ENCODE measurements at regions of chr17 and their contacts with region 1.

Region 1: GRCh38 chr17:42193969-42194899 is at the start of gene GHDC:
- DNase-seq: peak; percentile 55 to 88 (median 73)
- ATAC-seq: peak; percentile 97
- H3K4me3 ChIP-seq: peak within 1 kb of the TSS; percentile 75
- H3K4me3 Mint-ChIP-seq: peak within 1 kb of the TSS; percentile 95
- H3K27ac ChIP-seq: peak within 1 kb of the TSS; percentile 34 to 39
- H3K27ac Mint-ChIP-seq: peak within 1 kb of the TSS; percentile 76
- H3K4me1 ChIP-seq: peaks cover 26% of the 10 kb centered on the region
- H3K4me1 Mint-ChIP-seq: peaks cover 18% of the 10 kb centered on the region
- H3K27me3 ChIP-seq: no peaks in the 10 kb centered on the region
- H3K27me3 Mint-ChIP-seq: no peaks in the 10 kb centered on the region
- CTCF ChIP-seq: no peak
- total RNA-seq, gene GHDC: 6.8 to 8.3 TPM

Region 2: GRCh38 chr17:42039794-42040763 is 154.2 kb before region 1 on chr17:
- CTCF ChIA-PET with region 1: no interaction called
- POLR2A ChIA-PET with region 1: no interaction called
- intact Hi-C with region 1: no loop called
- DNase-seq: no peak
- ATAC-seq: no peak
- H3K4me3 ChIP-seq: no peak overlapping the region
- H3K4me3 Mint-ChIP-seq: no peak overlapping the region
- H3K27ac ChIP-seq: no peak overlapping the region
- H3K27ac Mint-ChIP-seq: no peak overlapping the region
- H3K4me1 ChIP-seq: no peaks in the 10 kb centered on the region
- H3K4me1 Mint-ChIP-seq: no peaks in the 10 kb centered on the region
- H3K27me3 ChIP-seq: peaks cover 2 to 4% of the 10 kb centered on the region in 2 experiments
- H3K27me3 Mint-ChIP-seq: peaks cover 19% of the 10 kb centered on the region
- CTCF ChIP-seq: no peak

Region 3: DNA sequence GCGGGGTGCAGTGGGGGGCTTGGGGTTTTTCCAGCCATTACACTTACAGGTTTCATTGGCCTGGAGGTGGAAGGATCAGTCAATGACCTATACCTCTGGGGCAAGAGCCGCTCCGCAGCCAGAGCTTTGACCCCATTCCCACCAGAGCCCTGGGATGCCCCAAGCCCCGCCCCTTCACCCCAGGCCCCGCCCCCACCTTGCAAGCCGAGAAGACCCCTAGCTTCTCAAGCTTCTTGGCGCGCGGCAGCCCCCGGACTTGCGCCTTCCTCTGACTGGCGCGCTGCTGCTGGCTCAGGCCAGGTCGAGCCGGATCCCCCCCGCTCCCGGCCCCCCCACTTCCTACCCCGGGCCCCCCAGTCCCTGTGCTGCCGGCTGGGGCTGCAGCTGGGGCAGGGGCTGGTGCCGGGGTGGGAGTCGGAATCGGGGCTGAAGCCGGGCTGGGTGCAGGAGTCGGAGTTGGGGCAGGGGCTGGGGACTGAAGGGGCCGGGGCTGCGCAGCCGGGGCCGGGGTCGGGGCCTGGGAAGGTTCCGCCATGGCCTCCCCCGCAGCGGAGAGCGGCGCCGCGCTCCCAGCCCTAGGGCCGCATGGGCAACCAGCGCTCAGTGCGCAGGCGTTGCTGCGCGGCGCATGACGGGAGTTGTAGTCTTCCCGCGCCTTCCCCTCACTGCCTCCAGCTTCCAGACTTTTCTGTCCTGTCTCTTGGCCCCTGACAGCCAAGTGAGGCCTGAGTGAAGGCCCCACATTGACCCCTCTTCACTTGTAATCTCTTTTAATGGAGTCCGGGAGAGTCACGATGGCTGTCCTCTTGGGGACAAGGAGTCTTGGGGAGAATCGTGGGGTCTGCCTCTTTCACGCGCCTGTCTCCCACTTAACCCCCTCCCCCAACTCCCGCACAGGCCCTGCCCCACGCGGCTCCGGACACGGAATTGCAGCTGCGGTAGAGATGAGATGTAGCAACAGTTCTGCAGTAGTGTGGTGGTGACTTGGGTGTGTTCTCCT is 73.2 kb before region 1 on chr17 and contains the start of gene KAT2A:
- CTCF ChIA-PET with region 1: no interaction called
- POLR2A ChIA-PET with region 1: no interaction called
- intact Hi-C with region 1: loop called in 1 of 2 experiments (anchors 5 kb)
- DNase-seq: peak; percentile 59 to 89 (median 72)
- ATAC-seq: peak; percentile 88
- H3K4me3 ChIP-seq: peak within 1 kb of the TSS; percentile 48
- H3K4me3 Mint-ChIP-seq: peak within 1 kb of the TSS; percentile 82
- H3K27ac ChIP-seq: no peak within 1 kb of the TSS
- H3K27ac Mint-ChIP-seq: no peak within 1 kb of the TSS
- H3K4me1 ChIP-seq: peaks cover 28% of the 10 kb centered on the region
- H3K4me1 Mint-ChIP-seq: peaks cover 25% of the 10 kb centered on the region
- H3K27me3 ChIP-seq: no peaks in the 10 kb centered on the region
- H3K27me3 Mint-ChIP-seq: no peaks in the 10 kb centered on the region
- CTCF ChIP-seq: no peak
- total RNA-seq, gene KAT2A: 38.5 to 42.4 TPM

Region 4: GRCh38 chr17:42171831-42172230 is 22.4 kb before region 1 on chr17:
- CTCF ChIA-PET with region 1: no interaction called
- POLR2A ChIA-PET with region 1: no interaction called
- intact Hi-C with region 1: no loop called
- DNase-seq: no peak
- ATAC-seq: no peak
- H3K4me3 ChIP-seq: no peak overlapping the region
- H3K4me3 Mint-ChIP-seq: no peak overlapping the region
- H3K27ac ChIP-seq: no peak overlapping the region
- H3K27ac Mint-ChIP-seq: no peak overlapping the region
- H3K4me1 ChIP-seq: peaks cover 3% of the 10 kb centered on the region
- H3K4me1 Mint-ChIP-seq: no peaks in the 10 kb centered on the region
- H3K27me3 ChIP-seq: no peaks in the 10 kb centered on the region
- H3K27me3 Mint-ChIP-seq: no peaks in the 10 kb centered on the region
- CTCF ChIP-seq: no peak

Region 5: GRCh38 chr17:42183741-42184711 is 10.2 kb before region 1 on chr17:
- CTCF ChIA-PET with region 1: interaction called, 12 read pairs
- POLR2A ChIA-PET with region 1: interaction called, 15 read pairs
- intact Hi-C with region 1: loop called in 1 of 2 experiments (anchors 1 kb)
- DNase-seq: peak; percentile 39 to 90 (median 68)
- ATAC-seq: peak; percentile 63
- H3K4me3 ChIP-seq: peak overlapping the region; percentile 87
- H3K4me3 Mint-ChIP-seq: peak overlapping the region; percentile 86
- H3K27ac ChIP-seq: peak overlapping the region; percentile 73 to 75
- H3K27ac Mint-ChIP-seq: peak overlapping the region; percentile 79
- H3K4me1 ChIP-seq: peaks cover 53% of the 10 kb centered on the region
- H3K4me1 Mint-ChIP-seq: peaks cover 39% of the 10 kb centered on the region
- H3K27me3 ChIP-seq: peaks cover 0 to 14% of the 10 kb centered on the region in 2 experiments
- H3K27me3 Mint-ChIP-seq: peaks cover 30% of the 10 kb centered on the region
- CTCF ChIP-seq: peak; percentile 68

Region 6: GRCh38 chr17:42227849-42228615 is 33.8 kb after region 1 on chr17:
- CTCF ChIA-PET with region 1: no interaction called
- POLR2A ChIA-PET with region 1: no interaction called
- intact Hi-C with region 1: no loop called
- DNase-seq: no peak
- ATAC-seq: no peak
- H3K4me3 ChIP-seq: no peak overlapping the region
- H3K4me3 Mint-ChIP-seq: no peak overlapping the region
- H3K27ac ChIP-seq: no peak overlapping the region
- H3K27ac Mint-ChIP-seq: peak overlapping the region; percentile 43
- H3K4me1 ChIP-seq: peaks cover 4% of the 10 kb centered on the region
- H3K4me1 Mint-ChIP-seq: peaks cover 8% of the 10 kb centered on the region
- H3K27me3 ChIP-seq: no peaks in the 10 kb centered on the region
- H3K27me3 Mint-ChIP-seq: no peaks in the 10 kb centered on the region
- CTCF ChIP-seq: no peak